Activated naive CD4-positive, alpha-beta T cell treated with anti-CD3 and anti-CD28 coated beads, Interleukin-2, amount 10 ng/mL, durations not matched to agents 7 days and 5 days (primary cell): ENCODE measurements at regions of chr1 and their contacts with region 1.

Region 1: DNA sequence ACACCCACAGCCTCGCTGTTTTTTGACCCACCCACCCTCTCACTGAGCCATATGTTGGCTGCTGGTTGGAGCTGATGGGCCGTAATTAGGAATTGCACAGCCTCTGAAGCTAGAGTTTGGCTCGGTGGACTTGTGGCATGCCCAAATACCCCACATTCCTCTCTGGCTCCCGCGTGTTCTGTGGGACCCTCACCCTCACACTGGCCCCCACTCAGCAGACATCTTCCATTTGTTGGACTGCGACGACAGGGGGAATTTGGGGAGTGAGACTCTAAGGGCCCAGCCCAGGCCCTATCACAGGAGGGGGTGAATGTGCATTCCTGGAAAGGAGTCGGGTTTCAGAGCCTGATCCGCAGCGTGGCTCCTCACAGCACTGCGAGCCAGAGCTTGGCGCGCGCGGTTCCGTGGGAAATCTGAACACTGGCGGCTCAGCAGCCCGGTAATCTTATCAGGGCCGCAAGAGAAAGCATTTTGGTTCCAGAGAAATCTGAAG is 5.2 kb downstream of the RCSD1 start:
- DNase-seq: no peak
- H3K4me3 Mint-ChIP-seq: no peak overlapping the region
- H3K27ac Mint-ChIP-seq: peak overlapping the region; percentile 87
- H3K4me1 Mint-ChIP-seq: peaks cover 73% of the 10 kb centered on the region
- H3K27me3 Mint-ChIP-seq: no peaks in the 10 kb centered on the region

Region 2: DNA sequence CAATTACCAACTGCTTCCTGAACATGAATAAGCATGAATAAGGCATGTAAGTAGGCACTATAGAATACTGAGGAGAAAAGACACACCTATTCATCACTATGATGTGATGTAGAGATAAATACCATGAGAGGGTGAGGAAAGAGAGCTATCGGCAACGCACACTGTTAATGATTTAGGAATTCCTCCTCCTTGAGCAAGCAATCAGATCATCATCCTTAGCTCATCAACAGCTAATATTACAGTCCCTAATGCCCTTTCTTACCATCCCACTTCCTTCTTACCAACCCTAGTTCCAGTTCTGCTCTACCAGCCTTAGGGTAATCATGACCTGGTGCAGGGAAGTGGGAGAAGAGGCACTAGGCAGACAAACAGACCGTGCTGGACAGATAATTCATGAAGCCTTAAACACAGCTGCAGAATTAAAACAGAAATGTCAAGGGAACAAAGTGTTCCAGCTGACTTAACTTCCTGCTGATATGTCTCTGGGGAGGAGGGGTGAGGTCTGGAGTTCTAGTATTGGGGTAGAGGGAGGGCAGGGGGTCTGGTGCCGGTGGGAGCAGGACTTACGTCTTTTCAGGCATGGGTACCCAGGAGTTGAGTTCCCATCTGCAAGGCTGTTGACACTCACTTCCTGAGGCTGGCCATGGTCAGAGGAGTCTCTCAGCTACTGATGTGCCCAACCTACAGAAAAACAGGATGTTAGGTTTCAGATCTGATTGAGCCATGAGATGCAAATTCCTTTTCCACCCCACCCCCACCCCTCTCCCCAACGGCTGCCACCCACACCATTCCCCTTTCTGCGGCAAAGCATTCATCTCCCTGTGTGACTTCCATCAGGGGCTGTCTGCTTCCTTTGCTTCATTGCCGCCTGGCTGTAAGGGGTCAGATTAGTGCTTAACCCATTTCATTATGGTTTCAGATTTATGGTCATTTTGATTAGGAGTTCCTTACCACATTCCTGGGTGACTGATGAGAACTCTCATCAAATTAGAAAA is 17.8 kb before region 1 on chr1:
- CTCF ChIA-PET with region 1: interaction called, 22 read pairs
- DNase-seq: peak; percentile 46
- H3K4me3 Mint-ChIP-seq: peak overlapping the region; percentile 75
- H3K27ac Mint-ChIP-seq: peak overlapping the region; percentile 95
- H3K4me1 Mint-ChIP-seq: peaks cover 71% of the 10 kb centered on the region
- H3K27me3 Mint-ChIP-seq: no peaks in the 10 kb centered on the region